ENCODE measurements at regions of chr21 and their contacts with region 1.

Region 1: DNA sequence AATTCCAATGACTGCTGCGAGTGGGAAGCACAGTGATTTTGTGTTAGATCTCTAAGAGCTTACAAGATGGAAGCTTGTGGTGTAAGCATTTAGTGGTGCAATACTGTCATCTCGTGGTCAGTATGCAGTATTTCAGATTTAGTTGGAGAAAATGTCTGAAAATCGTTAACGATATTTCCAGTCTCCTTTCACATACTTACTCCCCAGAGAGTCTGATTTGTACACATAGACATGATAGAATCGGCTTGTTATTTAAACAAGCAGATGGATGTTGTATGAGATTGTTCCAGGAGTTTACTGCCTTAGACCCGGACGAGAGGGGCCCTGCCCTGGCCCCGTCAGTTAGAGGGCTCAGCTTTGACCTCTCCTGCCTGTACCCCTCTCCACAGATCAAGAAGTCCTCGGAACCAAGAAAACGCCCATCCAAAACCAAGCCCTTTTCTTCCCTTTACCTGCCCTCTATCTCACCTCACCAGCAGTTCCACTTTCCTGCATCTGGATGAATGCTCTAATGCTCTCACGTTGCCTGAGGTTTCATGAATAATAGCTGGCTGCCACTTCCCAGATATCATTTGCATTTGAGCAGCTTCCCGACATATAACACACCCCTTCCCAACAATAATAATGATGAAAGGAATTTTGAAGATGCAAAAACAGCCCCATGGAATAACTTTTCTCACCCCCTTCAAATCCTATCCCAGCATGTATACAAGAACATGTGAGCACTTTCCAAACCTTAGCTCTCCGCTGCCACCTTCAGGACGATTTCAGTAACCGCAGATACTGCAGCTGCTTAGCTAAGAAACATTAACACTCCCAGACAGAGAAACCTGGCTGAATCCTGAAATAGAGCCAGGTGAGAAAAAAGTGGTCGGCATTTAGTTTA is 247.3 kb downstream of the LTN1 start:
- DNase-seq: peak; percentile 31 to 86 (median 59)
- ATAC-seq: peak; percentile 81 to 87 (median 81)
- H3K4me3 ChIP-seq: peak overlapping the region; percentile 44 to 79
- H3K4me3 Mint-ChIP-seq: no peak overlapping the region
- H3K27ac ChIP-seq: no peak overlapping the region
- H3K27ac Mint-ChIP-seq: no peak overlapping the region
- H3K4me1 ChIP-seq: peaks cover 5% of the 10 kb centered on the region in 2 experiments
- H3K4me1 Mint-ChIP-seq: no peaks in the 10 kb centered on the region
- H3K27me3 ChIP-seq: no peaks in the 10 kb centered on the region
- H3K27me3 Mint-ChIP-seq: no peaks in the 10 kb centered on the region

Region 2: DNA sequence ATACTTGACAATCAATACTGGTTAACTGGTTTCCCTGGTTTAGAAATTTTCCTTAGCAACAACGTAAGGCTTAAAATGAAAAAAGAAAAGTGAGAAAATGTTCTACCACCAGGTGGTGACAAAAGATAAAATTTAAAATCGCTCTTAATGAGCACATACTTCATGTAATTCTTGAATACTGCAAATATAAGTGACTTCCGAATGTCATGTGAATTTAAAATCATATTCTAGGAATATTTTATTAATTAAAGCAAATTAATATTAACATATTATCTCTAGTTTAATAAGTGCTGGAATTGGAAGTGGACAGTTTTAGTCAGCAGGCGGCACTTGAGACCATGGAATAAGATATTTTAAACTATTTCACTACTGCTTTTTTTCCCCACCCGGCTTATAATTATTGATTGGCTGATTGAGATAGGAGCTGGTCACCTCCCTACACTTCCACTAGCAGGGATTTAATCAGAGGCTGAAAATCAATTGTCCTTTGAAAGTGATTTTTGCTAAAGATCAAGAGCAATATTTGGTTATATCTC is 1895.2 kb before region 1 on chr21:
- CTCF ChIA-PET with region 1: interaction called, 11 to 22 read pairs
- POLR2A ChIA-PET with region 1: no interaction called
- DNase-seq: peak in 1 of 35 experiments; percentile 27
- ATAC-seq: no peak
- H3K4me3 ChIP-seq: no peak overlapping the region
- H3K4me3 Mint-ChIP-seq: no peak overlapping the region
- H3K27ac ChIP-seq: no peak overlapping the region
- H3K27ac Mint-ChIP-seq: no peak overlapping the region
- H3K4me1 ChIP-seq: peaks cover 3 to 14% of the 10 kb centered on the region in 2 experiments
- H3K4me1 Mint-ChIP-seq: peaks cover 21 to 22% (median 22%) of the 10 kb centered on the region in 3 donors
- H3K27me3 ChIP-seq: peaks cover 16 to 17% of the 10 kb centered on the region in 2 experiments
- H3K27me3 Mint-ChIP-seq: peaks cover 47 to 50% of the 10 kb centered on the region in 2 donors

Region 3: GRCh38 chr21:28516991-28517592 is 228.3 kb before region 1 on chr21:
- CTCF ChIA-PET with region 1: interaction called, 71 to 161 read pairs
- POLR2A ChIA-PET with region 1: no interaction called
- DNase-seq: peak; percentile 4 to 72 (median 46)
- ATAC-seq: peak; percentile 77 to 88 (median 83)
- H3K4me3 ChIP-seq: no peak overlapping the region
- H3K4me3 Mint-ChIP-seq: no peak overlapping the region
- H3K27ac ChIP-seq: no peak overlapping the region
- H3K27ac Mint-ChIP-seq: no peak overlapping the region
- H3K4me1 ChIP-seq: peaks cover 0 to 2% of the 10 kb centered on the region in 2 experiments
- H3K4me1 Mint-ChIP-seq: peaks cover 0 to 5% (median 4%) of the 10 kb centered on the region in 3 donors
- H3K27me3 ChIP-seq: no peaks in the 10 kb centered on the region
- H3K27me3 Mint-ChIP-seq: no peaks in the 10 kb centered on the region

Region 4: DNA sequence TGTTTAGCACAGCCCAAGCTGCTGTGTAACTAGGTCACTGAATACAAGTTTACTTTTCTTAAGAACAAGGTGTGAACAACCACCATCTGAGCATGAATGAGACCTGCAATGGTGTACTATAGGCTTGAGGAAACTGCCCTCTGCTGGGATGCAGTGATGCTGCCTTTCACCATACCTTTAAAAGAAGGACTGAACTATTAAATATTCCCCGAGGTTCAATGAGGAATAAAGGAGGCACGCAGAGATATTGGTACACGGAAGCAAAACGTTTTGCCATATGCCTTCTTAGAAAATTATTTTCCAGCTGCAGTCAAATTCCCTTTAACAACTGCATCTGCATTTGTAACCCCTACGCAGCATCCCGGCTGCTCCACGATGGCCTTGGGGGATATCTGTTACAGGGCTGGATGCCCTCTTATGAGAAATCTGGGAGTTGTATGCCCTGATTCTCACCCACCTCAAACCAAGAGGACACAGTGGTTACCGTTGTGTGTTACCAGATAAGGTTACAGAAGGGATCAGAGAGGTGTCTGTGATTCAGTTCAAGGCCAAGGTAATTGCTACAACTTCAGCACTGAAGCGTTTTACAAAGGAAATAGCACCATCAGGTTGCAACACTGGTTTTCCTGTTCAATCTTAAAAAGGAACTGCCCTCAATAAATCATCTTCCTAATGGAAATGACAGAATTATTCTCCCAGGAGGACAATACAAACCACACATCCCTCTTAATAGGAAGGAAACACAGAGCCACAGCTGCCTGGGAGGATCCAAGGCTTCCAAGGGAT is 223.2 kb before region 1 on chr21:
- CTCF ChIA-PET with region 1: interaction called, 71 to 161 read pairs
- POLR2A ChIA-PET with region 1: no interaction called
- DNase-seq: peak in 1 of 35 experiments; percentile 16
- ATAC-seq: no peak
- H3K4me3 ChIP-seq: no peak overlapping the region
- H3K4me3 Mint-ChIP-seq: no peak overlapping the region
- H3K27ac ChIP-seq: no peak overlapping the region
- H3K27ac Mint-ChIP-seq: no peak overlapping the region
- H3K4me1 ChIP-seq: peaks cover 0 to under 1% of the 10 kb centered on the region in 2 experiments
- H3K4me1 Mint-ChIP-seq: peaks cover 1 to 7% (median 2%) of the 10 kb centered on the region in 3 donors
- H3K27me3 ChIP-seq: no peaks in the 10 kb centered on the region
- H3K27me3 Mint-ChIP-seq: peaks cover 0 to 14% of the 10 kb centered on the region in 2 donors

Region 5: DNA sequence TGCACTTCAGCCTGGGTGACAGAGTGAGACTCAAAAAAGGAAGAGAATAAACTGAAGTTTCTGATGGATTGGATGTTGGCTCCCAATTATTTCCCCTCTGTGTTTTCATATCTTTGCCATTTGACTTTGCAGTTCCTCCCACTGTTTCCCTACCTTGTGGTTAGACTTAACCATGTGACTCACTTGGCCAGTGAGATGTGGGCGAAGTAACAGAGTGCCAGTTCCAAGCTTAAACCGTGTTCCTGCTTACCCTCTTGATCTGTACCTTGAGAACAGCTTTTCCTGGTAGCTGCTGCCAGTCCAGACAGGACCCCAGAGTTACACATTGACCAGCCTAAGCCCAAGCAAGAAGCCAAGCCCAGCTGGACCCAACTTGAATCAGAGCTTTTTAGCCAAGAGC is 76.1 kb before region 1 on chr21:
- CTCF ChIA-PET with region 1: no interaction called
- POLR2A ChIA-PET with region 1: no interaction called
- DNase-seq: no peak
- ATAC-seq: no peak
- H3K4me3 ChIP-seq: no peak overlapping the region
- H3K4me3 Mint-ChIP-seq: no peak overlapping the region
- H3K27ac ChIP-seq: no peak overlapping the region
- H3K27ac Mint-ChIP-seq: no peak overlapping the region
- H3K4me1 ChIP-seq: no peaks in the 10 kb centered on the region
- H3K4me1 Mint-ChIP-seq: peaks cover 0 to 11% (median 3%) of the 10 kb centered on the region in 3 donors
- H3K27me3 ChIP-seq: no peaks in the 10 kb centered on the region
- H3K27me3 Mint-ChIP-seq: no peaks in the 10 kb centered on the region

Region 6: DNA sequence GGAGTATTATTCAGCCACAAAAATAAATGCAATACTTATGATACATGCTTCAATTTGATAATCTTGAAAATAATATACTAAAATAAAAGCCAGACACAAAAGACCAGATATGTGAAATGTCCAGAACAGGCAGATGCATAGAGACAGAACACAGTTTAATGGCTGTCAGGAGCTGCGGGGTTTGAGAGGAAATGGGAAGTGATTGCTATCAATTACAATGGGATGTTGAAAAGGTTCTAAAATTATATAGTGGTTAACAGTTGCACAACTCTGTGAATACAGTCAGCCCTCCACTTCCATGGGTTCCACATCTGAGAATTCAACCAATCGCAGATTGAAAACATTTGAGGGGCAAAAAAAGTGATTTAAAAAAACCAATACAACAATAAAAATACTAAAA is 193.4 kb after region 1 on chr21:
- CTCF ChIA-PET with region 1: interaction called in 1 of 2 experiments, 20 read pairs
- POLR2A ChIA-PET with region 1: no interaction called
- DNase-seq: no peak
- ATAC-seq: no peak
- H3K4me3 ChIP-seq: no peak overlapping the region
- H3K4me3 Mint-ChIP-seq: no peak overlapping the region
- H3K27ac ChIP-seq: no peak overlapping the region
- H3K27ac Mint-ChIP-seq: no peak overlapping the region
- H3K4me1 ChIP-seq: no peaks in the 10 kb centered on the region
- H3K4me1 Mint-ChIP-seq: peaks cover 0 to 3% (median 0%) of the 10 kb centered on the region in 3 donors
- H3K27me3 ChIP-seq: no peaks in the 10 kb centered on the region
- H3K27me3 Mint-ChIP-seq: no peaks in the 10 kb centered on the region

Measured in T-cell (primary cell).